T-cell (primary cell): ENCODE measurements at regions of chr7 and their contacts with region 1.

Region 1: DNA sequence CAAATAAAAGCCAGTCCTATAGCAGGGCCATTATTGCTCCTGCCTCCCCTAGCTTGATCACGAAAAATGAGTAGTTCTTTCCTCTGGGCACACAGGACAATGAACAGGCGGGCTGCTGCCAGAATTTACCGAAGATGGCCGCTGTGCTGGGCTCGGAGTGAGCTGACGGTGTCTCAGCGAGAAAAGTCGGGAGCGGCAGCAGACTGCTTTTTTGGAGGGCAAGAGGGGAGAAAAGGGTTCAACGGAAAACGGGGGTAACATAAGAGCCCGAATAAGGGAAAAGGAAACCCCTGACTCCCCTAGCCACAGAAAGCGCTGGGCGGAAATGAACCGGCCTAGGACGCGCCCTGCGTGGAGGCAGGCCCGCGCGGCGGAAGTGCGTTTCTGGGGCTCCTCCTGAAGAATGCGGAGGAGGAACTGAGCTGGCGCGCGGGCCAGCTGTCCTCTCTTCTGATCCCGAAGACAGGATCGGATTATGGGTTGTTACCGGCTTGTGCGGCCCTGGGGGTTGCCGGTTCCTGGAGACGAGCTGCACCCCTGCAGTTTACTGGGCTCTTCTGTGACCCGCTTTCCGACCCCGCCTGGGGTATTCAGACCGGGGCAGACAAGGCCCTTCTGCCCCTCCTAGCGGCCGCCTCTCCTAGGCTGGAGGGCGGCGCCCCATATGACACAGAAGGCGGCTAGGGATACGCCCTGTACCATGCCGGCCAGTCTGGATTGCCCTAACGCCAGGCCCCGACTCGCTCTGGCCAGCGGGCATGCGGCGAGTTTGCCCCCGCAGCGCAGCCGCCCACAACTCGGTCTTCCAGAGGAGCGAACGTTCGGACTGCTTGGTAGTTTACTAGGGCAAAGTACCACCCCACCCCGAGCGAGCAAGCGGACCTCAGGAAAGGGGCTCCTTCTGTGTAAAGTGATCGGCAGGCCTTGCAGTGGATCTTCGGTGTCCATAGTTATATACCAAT is 30.1 kb upstream of the KMT2E start:
- DNase-seq: peak; percentile 64 to 89 (median 80)
- ATAC-seq: peak; percentile 88 to 91 (median 90)
- H3K4me3 ChIP-seq: peak overlapping the region; percentile 92 to 93
- H3K4me3 Mint-ChIP-seq: peak overlapping the region; percentile 98 to 100 (median 100)
- H3K27ac ChIP-seq: peak overlapping the region; percentile 99
- H3K27ac Mint-ChIP-seq: peak overlapping the region; percentile 100
- H3K4me1 ChIP-seq: peaks cover 24 to 30% of the 10 kb centered on the region in 2 experiments
- H3K4me1 Mint-ChIP-seq: peaks cover 52 to 74% (median 69%) of the 10 kb centered on the region in 3 donors
- H3K27me3 ChIP-seq: no peaks in the 10 kb centered on the region
- H3K27me3 Mint-ChIP-seq: no peaks in the 10 kb centered on the region

Region 2: DNA sequence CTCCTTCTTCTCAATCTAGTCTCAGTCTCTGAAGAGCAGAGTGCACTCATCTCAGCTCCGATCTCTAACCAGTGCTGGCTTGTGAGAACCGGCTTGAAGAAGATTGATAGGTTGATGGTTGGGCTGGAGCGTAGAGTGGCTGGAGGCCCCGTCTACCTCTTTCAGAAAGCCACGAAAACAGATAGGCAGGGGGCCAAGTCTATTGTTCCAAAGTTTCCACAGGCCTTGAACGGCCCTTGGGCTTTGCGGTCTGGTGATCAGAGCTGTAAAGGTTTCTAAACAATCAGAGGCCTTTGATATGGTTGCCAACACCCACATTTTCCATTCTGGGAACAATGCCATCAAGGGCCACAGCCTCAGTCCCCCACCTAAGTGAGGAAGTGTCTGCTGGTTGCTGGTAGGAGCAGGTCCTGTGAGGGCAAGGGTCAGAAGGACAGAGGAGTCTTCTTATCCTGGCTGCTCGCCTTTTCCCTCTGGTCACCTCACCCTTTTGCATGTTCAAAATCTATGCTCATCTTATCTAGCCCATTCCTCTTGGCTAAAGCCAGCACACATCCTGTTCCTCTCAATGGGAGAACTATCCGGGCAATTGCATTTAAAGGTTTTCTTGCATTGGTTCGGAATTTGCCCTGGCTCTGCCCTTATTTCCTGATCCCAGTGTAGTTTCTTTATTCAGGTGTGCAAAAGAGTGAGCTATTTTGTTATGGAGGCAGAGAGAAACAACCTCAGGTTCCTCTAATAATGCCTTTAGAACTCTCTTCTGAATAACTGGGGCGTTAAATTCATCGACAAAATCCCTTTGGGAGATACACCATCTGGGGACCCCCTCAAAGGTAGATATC is 40.1 kb before region 1 on chr7:
- CTCF ChIA-PET with region 1: interaction called in 1 of 2 experiments, 20 read pairs
- POLR2A ChIA-PET with region 1: interaction called, 4 to 26 read pairs
- DNase-seq: peak; percentile 25 to 80 (median 58)
- ATAC-seq: peak; percentile 19 to 47 (median 43)
- H3K4me3 ChIP-seq: peak overlapping the region; percentile 8 to 24
- H3K4me3 Mint-ChIP-seq: peak overlapping the region; percentile 81 to 96 (median 85)
- H3K27ac ChIP-seq: peak overlapping the region; percentile 99
- H3K27ac Mint-ChIP-seq: peak overlapping the region; percentile 99 to 100
- H3K4me1 ChIP-seq: peaks cover 30 to 65% of the 10 kb centered on the region in 2 experiments
- H3K4me1 Mint-ChIP-seq: peaks cover 66 to 74% (median 67%) of the 10 kb centered on the region in 3 donors
- H3K27me3 ChIP-seq: no peaks in the 10 kb centered on the region
- H3K27me3 Mint-ChIP-seq: no peaks in the 10 kb centered on the region

Region 3: DNA sequence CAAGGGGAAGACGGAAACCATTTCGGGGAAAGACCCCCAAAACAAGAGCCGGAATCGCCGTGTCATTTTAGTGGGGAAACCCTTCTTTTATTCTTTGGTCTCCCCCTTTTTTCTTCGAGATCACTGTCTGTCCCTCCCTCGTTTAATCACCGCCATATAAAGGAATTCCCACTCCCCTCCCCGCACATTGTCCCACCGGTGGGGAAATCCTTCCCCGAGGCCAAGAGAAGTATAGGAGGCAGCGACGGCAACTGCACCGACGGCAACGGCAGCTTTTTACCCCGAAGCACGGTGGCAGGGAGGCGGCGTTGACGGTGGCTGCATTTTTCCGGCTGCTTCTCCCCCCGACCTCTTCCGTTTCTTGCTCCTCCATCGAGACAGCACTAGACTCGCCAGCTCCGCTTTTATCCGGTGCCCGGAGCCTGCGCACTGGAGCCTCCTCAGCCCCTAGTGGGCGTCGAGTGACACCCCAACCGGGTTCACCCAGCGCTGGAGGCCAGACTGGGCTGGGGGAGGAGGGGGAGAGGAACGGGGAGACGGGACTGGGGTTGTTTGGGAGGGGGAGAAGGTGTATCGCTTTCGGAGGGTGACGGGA is 29.5 kb after region 1 on chr7:
- CTCF ChIA-PET with region 1: interaction called, 11 to 196 read pairs
- POLR2A ChIA-PET with region 1: interaction called, 34 to 266 read pairs
- DNase-seq: peak; percentile 89 to 97 (median 94)
- ATAC-seq: peak; percentile 59 to 72 (median 70)
- H3K4me3 ChIP-seq: peak overlapping the region; percentile 79 to 88
- H3K4me3 Mint-ChIP-seq: peak overlapping the region; percentile 97 to 100 (median 100)
- H3K27ac ChIP-seq: peak overlapping the region; percentile 98
- H3K27ac Mint-ChIP-seq: peak overlapping the region; percentile 100
- H3K4me1 ChIP-seq: peaks cover 14 to 32% of the 10 kb centered on the region in 2 experiments
- H3K4me1 Mint-ChIP-seq: peaks cover 41 to 55% (median 44%) of the 10 kb centered on the region in 3 donors
- H3K27me3 ChIP-seq: no peaks in the 10 kb centered on the region
- H3K27me3 Mint-ChIP-seq: no peaks in the 10 kb centered on the region

Region 4: DNA sequence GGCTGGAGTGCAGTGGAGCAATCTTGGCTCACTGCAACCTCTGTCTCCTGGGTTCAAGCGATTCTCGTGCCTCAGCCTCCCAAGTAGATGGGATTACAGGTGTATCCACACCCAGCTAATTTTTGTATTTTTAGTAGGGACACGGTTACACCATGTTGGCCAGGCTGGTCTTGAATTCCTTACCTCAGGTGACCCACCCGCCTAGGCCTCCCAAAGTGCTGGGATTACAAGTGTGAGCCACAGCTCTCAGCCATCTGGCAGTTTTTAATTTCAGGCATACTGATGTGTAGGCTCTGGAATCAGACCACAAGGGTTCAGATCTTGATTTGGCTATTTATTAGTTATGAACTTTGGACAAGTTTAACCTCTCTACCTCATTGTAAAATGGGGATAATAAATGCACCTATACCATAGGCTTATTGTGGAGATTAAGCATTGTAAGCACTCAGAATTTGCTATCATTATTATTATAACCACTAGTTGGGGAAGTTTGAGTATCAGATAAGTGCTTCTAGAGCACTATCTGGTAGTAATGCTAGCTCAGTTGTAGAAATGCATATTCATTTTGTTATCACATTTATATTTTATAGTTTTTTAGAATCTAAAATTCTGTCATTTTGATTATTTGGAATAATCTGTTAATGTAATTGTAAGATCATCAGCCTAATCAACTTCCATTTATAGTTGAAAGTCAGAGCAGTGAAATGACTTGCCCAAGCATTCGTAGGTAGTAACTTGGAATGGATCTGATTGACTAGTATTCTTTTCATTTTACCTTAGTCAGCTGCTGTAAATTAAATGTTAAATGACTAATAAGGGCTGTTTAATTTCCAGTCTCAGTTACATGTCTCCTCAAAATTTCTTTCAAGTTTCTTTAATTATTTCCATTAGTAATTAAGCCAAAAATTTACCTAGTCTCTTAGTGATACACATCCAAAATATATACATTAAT is 52.6 kb after region 1 on chr7:
- CTCF ChIA-PET with region 1: interaction called, 18 to 81 read pairs
- POLR2A ChIA-PET with region 1: interaction called, 5 to 11 read pairs
- DNase-seq: no peak
- ATAC-seq: peak in 1 of 4 experiments; percentile 23
- H3K4me3 ChIP-seq: no peak overlapping the region
- H3K4me3 Mint-ChIP-seq: peak overlapping the region; percentile 7 to 27 (median 24)
- H3K27ac ChIP-seq: peak overlapping the region; percentile 34
- H3K27ac Mint-ChIP-seq: peak overlapping the region; percentile 37 to 68
- H3K4me1 ChIP-seq: peaks cover 4 to 45% of the 10 kb centered on the region in 2 experiments
- H3K4me1 Mint-ChIP-seq: peaks cover 61 to 72% (median 68%) of the 10 kb centered on the region in 3 donors
- H3K27me3 ChIP-seq: no peaks in the 10 kb centered on the region
- H3K27me3 Mint-ChIP-seq: no peaks in the 10 kb centered on the region

Region 5: GRCh38 chr7:105060437-105060836 is 76.6 kb after region 1 on chr7:
- CTCF ChIA-PET with region 1: interaction called, 5 to 13 read pairs
- POLR2A ChIA-PET with region 1: no interaction called
- DNase-seq: no peak
- ATAC-seq: peak in 1 of 4 experiments; percentile 21
- H3K4me3 ChIP-seq: no peak overlapping the region
- H3K4me3 Mint-ChIP-seq: no peak overlapping the region
- H3K27ac ChIP-seq: no peak overlapping the region
- H3K27ac Mint-ChIP-seq: peak overlapping the region; percentile 67 to 76
- H3K4me1 ChIP-seq: peaks cover 0 to 7% of the 10 kb centered on the region in 2 experiments
- H3K4me1 Mint-ChIP-seq: peaks cover 67 to 81% (median 78%) of the 10 kb centered on the region in 3 donors
- H3K27me3 ChIP-seq: no peaks in the 10 kb centered on the region
- H3K27me3 Mint-ChIP-seq: no peaks in the 10 kb centered on the region